GM10248 (cell line): ENCODE measurements at regions of chr7 and their contacts with region 1.

Region 1: DNA sequence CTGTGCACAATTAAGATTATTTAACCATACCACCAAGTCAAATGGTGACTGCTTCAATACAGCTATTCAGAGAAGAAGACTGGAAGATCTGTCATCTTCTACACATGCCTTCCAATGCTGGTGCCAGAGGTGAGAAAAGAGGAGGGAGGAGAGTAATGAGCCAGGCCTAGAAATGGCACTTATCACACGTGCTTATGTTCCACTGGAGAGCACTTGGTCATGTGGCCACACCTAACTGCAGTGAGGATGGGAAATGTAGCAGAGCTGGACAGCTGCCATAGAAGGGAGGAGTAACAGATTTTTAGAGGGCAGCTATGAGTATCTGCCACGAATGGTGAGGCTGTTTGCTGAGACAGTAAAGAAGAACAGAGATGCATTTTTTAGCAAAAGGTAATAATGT is 77.1 kb downstream of the MPLKIP start:
- DNase-seq: no peak
- CTCF ChIP-seq: no peak

Region 2: DNA sequence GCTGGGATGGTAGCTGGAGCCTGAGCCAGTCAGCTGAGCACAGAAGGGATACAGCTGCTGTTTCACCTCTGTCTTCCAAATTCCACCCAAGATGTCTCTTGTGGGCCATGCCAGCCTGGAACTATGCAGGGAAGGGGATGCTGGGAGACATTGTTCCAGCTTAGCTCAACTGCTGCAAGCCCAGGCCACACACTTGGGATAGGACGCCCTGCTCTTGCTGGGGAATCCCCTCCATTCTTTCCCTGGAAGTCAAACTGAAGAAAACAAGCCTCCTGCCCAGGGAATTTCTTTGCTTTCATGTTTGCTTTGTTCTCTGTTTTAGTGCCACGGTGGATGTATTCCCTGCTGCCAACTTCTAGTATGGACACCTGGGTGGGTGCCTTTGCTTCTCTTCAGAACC is 162.4 kb before region 1 on chr7:
- CTCF ChIA-PET with region 1: interaction called, 170 read pairs
- POLR2A ChIA-PET with region 1: no interaction called
- DNase-seq: no peak
- CTCF ChIP-seq: no peak

Region 3: GRCh38 chr7:39948956-39949928 is 108.0 kb before region 1 on chr7:
- CTCF ChIA-PET with region 1: interaction called, 46 read pairs
- POLR2A ChIA-PET with region 1: no interaction called
- DNase-seq: peak; percentile 92
- CTCF ChIP-seq: no peak

Region 4: DNA sequence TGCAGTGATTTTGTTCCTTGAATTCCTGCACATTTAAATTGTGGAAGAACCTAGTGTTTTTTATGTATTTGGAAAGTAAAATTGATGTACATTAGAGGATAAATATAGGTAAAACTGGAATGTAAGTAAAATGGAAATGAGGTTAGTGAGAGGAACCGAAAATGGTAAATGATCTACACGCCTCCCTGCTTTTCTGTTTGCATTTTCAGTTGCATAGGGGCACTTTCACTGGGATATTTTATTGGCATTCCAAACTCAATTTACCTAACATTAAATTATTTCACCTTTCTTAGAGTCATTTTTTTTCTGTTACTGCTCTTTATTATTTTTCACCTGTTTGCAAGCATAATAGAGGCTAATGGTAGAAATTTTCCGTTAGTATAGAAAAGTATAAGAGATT is 99.3 kb before region 1 on chr7:
- CTCF ChIA-PET with region 1: interaction called, 13 read pairs
- POLR2A ChIA-PET with region 1: interaction called, 3 read pairs
- DNase-seq: peak; percentile 24
- CTCF ChIP-seq: no peak

Region 5: GRCh38 chr7:40015790-40016296 is 41.4 kb before region 1 on chr7:
- CTCF ChIA-PET with region 1: interaction called, 12 read pairs
- POLR2A ChIA-PET with region 1: no interaction called
- DNase-seq: peak; percentile 66
- CTCF ChIP-seq: no peak

Region 6: GRCh38 chr7:40027545-40027944 is 29.7 kb before region 1 on chr7:
- CTCF ChIA-PET with region 1: interaction called, 17 read pairs
- POLR2A ChIA-PET with region 1: no interaction called
- DNase-seq: no peak
- CTCF ChIP-seq: no peak

Region 7: DNA sequence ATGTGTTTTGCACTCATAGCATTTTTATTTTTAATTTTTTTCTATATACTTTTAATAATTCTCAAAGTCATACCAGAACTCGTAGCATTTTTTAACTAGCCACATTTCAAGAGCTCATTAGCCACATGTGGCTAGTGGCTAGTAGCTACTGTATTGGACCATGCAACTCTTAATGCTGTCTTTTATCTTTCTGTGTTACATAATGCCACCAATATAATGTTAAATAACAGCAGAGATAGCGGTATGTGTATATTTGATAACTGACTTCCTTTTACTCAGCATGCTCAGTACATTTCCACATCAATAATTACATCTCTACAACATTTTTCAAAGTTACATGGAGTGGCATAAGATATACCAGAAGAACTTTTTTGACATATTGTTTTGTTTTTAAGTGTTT is 15.8 kb before region 1 on chr7:
- CTCF ChIA-PET with region 1: interaction called, 66 read pairs
- POLR2A ChIA-PET with region 1: no interaction called
- DNase-seq: no peak
- CTCF ChIP-seq: no peak